ENCODE measurements at regions of chr2 and their contacts with region 1.

Region 1: DNA sequence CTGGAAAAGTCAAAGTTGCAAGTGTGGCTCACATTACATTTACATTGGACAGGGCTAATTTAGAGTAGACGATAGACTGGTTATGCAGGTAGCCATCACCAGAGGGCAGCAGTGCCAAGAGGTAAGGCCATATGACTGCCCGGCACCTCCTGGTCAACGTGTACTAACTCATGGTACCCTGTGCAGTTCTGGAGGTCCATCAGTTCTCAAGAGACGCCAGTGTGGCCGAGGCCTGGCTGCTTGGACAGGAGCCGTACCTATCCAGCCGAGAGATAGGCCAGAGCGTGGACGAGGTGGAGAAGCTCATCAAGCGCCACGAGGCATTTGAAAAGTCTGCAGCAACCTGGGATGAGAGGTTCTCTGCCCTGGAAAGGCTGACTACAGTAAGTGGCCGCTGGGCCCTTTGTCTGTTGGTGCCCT is 65.8 kb upstream of the EML6 start:
- DNase-seq: peak; percentile 72
- ATAC-seq: peak; percentile 76

Region 2: DNA sequence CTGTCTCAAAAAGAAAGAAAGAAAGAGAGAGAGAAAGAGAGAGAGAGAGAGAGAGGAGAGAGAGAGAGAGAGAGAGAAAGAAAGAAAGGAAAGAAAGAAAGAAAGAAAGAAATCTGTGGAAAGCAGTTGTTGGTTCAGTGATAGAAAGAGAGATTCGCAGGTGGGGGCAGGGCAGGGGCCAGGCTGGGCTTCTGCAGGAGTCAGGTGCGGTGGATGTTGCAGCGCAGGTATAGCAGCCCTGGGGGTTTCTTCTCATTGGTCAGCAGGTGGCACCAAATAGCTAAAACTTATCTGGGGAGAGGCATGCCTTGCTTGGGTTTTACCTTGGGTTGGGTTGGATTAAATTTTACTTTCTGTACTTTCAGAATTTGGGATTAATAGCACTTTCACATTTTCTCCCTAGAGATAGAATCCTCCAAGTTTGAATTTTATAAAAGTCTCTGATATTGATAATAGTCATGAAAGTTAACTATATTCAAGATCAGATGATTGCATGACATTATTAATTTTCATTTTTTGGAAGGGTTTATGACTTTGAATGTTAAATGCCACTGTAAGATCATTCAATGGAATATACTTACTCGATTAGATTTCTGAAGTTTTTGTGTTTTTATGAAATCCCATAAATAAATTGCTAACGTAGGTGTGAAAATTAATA is 134.9 kb before region 1 on chr2:
- intact Hi-C with region 1: loop called (anchors 10 kb)
- DNase-seq: peak; percentile 42
- ATAC-seq: peak; percentile 43

Region 3: DNA sequence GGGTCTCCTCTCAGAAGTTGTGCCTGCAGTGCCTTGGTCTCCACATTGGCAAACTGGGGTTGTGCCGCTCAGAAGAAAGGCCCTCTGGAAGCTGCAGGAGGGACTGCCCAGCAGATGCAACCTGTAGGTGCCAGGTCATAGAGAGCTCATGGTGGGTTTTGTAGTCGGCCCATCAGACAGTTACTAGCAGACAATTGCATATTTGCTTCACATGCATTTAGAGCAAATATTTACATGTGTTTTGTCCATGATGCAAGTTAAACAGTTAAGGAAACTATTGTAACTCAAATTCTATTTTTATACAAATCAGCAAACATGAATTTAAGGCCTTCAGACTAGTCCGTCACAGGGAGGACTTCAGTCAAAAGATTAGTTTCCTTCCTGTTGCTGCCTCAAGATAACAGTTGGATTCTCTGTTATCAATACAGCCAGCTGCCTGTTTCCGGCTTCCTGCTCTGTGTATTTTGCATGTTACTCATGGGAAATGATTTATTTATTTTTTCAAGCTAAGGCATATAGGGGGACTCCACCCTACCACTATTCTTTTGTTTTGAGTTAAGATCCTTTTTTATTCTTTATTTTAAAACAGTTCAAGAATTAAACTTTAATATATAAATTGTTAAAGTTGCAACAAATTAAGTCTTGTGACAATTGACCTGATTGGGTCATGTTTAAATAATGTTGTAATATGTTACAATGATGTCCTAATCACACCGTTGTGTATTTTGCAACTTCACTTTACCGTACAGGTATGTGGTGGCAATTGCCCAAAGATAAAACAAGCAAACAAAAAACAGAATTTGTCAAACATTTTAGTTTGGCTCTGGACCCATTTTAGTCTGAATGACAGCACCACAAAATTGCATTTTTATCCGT is 68.1 kb before region 1 on chr2:
- intact Hi-C with region 1: no loop called
- DNase-seq: no peak
- ATAC-seq: peak; percentile 64

Region 4: DNA sequence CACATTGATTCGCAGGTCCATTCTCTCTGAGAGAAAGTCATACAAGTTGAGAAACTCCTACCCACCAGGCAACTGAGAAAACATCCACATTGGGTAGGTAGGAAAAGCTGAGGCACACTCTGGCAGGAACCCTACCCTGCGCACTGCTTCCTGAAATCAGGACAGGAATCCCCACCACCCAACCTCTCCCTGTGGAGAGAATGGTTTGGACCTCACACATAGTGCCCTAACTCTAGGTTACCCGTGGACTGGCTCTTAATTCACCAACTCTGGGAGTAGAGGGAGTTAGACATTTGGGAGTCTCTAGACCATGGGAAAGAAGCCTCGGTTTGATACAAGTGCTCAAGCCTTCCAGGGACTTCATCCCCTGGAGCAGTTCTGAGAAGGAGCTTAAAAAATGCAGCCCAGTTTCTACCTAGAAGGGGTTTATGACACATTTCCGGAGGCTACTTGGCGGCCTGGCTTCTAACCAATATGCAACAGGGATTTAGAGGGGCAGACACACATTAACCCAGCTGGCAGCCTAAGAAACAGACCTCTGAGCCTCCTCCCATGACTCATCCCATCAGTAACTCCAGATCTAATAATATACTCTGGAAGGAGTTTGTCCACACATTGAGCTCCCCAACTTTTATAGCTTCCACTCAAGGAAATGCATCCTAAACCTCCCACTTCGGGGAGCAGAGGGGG is 202.5 kb after region 1 on chr2:
- intact Hi-C with region 1: no loop called
- DNase-seq: no peak
- ATAC-seq: no peak

Measured in left ventricle myocardium superior (tissue), 1 donor.